Gastrocnemius medialis (tissue), 4 donors: ENCODE measurements at regions of chr17 and their contacts with region 1.

Region 1: DNA sequence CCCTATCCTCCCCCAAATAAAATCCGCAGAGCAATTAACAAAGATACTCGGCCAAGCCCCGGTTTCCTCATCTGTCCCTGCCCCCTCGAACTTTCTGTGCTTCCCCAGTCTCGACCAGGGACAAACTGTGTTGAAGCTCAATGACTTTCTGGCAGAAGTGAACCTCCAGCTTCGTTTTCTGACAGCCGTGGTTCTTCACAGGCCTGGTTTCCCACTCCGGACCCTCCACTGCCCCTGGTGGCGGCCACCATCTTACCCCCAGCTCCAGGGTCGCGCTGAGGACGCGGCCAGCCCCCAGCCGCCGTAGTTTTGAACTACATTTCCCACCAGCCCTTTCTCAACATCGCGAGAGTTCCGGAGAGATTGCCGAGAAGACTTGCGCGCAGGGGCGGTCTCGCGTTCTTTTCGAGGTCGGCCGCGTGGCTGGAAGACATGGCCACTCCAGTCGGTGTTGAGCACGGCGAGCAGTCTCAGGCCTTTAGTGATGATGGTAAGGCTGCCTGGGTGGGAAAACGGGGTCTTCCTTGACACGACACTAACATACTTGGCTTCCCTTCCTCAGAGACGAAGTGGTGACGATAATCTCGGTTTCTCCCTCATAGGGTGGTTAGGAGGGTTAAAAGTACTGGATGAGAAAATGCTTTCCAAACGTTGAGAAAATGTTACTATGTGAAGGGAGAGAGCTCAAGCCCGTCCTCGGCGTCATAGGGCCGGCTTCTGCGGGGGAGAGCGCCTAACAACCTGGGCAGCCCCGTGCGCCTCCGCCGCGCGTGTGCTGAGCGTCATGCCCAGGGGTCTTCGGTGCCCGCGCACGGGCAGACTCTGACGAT is 17.7 kb downstream of the PRCD start:
- DNase-seq: peak; percentile 93 to 94
- ATAC-seq: peak; percentile 86 to 89
- H3K4me3 ChIP-seq: peak overlapping the region; percentile 79 to 100 (median 84)
- H3K27ac ChIP-seq: peak overlapping the region; percentile 89 to 97 (median 94)
- H3K4me1 ChIP-seq: peaks cover 36 to 62% of the 10 kb centered on the region in 2 donors
- H3K27me3 ChIP-seq: no peaks in the 10 kb centered on the region
- CTCF ChIP-seq: peak; percentile 69 to 85 (median 71)
- POLR2A ChIP-seq: peak; percentile 93 to 96

Region 2: GRCh38 chr17:76182016-76182764 is 375.4 kb before region 1 on chr17:
- in situ Hi-C with region 1: no loop called
- intact Hi-C with region 1: loop called (anchors 1 kb)
- DNase-seq: peak; percentile 75 to 89
- ATAC-seq: peak; percentile 85 to 87
- H3K4me3 ChIP-seq: no peak overlapping the region
- H3K27ac ChIP-seq: peak overlapping the region; percentile 8 to 39 (median 26)
- H3K4me1 ChIP-seq: peaks cover 17 to 35% of the 10 kb centered on the region in 2 donors
- H3K27me3 ChIP-seq: no peaks in the 10 kb centered on the region
- CTCF ChIP-seq: peak; percentile 74 to 84 (median 77)
- POLR2A ChIP-seq: no peak

Region 3: GRCh38 chr17:76515274-76515949 is 42.2 kb before region 1 on chr17:
- in situ Hi-C with region 1: no loop called
- intact Hi-C with region 1: loop called (anchors 5 kb)
- DNase-seq: peak; percentile 86 to 91
- ATAC-seq: peak; percentile 97 to 98
- H3K4me3 ChIP-seq: peak overlapping the region; percentile 24 to 54 (median 38)
- H3K27ac ChIP-seq: peak overlapping the region; percentile 73 to 86 (median 82)
- H3K4me1 ChIP-seq: peaks cover 14% of the 10 kb centered on the region in 2 donors
- H3K27me3 ChIP-seq: no peaks in the 10 kb centered on the region
- CTCF ChIP-seq: no peak
- POLR2A ChIP-seq: peak; percentile 21 to 39

Region 4: DNA sequence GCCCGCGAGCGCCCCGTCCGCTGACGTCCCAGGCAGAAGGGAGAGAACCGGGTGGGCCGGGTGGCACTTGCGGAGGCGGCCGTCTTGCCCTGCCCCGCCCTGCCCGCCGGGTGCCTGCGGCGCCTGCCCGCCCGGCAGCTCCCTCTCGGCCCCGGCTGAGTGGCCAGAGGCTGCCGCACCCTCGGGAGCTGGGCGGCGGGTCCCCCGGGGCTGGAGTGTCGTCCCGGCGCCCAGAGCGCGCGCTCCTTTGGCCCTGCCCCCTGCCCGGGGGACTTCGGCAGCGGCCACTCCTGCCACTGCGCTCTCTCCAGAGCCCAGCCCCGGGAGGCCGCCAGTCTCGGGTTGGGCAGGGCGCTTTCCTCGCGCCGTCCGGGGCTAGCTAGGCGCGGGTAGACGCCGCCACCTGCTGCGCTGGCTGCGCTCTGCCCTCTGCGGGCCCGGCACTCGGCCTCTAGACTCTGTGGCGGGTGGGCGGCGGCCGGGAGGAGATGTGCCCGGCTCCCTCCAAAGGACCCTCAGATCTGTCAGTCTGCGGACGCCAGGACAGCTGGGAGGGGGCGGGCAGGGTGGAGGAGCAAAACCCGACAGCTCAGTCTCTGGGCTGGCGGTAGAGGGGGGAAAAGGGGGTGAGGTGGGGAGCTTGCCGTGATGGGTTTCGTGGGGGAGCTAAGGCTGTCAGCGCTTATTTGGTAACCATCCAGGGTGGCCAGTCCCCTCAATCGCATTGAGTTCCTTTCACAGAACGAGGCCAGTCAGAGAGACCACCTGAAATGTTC is 28.4 kb after region 1 on chr17 and contains the start of gene ST6GALNAC2:
- in situ Hi-C with region 1: no loop called
- intact Hi-C with region 1: loop called (anchors 1 kb)
- DNase-seq: peak; percentile 58 to 73
- ATAC-seq: peak; percentile 78 to 84
- H3K4me3 ChIP-seq: peak within 1 kb of the TSS; percentile 64 to 87 (median 78)
- H3K27ac ChIP-seq: peak within 1 kb of the TSS; percentile 61 to 84 (median 72)
- H3K4me1 ChIP-seq: peaks cover 6 to 14% of the 10 kb centered on the region in 2 donors
- H3K27me3 ChIP-seq: peaks cover 0 to 3% (median 0%) of the 10 kb centered on the region in 3 donors
- CTCF ChIP-seq: peak; percentile 67 to 79 (median 75)
- POLR2A ChIP-seq: peak; percentile 58 to 62
- total RNA-seq, gene ST6GALNAC2: 13.6 to 31.1 (median 27.4) TPM

Region 5: GRCh38 chr17:76659928-76660614 is 102.5 kb after region 1 on chr17:
- in situ Hi-C with region 1: no loop called
- intact Hi-C with region 1: no loop called
- DNase-seq: no peak
- ATAC-seq: no peak
- H3K4me3 ChIP-seq: no peak overlapping the region
- H3K27ac ChIP-seq: no peak overlapping the region
- H3K4me1 ChIP-seq: peaks cover 0 to 15% of the 10 kb centered on the region in 2 donors
- H3K27me3 ChIP-seq: no peaks in the 10 kb centered on the region
- CTCF ChIP-seq: no peak
- POLR2A ChIP-seq: no peak

Region 6: DNA sequence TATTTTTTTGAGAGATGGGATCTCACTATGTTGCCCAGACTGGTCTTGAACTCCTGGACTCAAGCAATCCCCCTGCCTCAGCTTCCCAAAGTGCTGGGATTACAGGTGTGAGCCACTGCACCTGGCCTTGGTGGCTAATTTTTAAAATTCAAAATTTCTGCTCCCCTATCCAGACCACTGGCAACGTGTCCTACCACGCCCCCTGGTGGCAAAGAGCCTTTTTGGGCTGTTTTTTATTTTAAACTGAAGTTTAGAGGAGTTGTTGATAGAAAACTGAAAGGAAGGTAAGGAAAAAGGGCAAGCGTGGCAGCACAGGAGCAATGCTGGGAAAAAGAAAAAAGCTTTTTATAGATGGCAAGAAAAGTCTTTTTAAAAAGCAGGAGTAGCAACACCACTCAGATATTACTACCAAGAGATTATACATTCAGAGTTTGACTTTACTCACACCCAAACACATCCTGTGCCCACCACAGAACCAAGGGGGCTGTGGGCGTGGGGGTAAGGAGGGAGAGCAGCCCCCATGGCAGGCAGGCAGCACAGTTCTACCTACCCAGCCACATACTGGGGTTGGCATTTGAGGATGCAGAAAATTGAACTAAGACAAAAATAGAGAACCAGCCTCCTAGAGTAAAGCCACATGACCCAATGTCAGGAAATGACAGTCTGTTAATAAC is 157.4 kb after region 1 on chr17:
- in situ Hi-C with region 1: loop called in 1 of 4 experiments (anchors 25 kb)
- intact Hi-C with region 1: no loop called
- DNase-seq: peak; percentile 19 to 37
- ATAC-seq: no peak
- H3K4me3 ChIP-seq: no peak overlapping the region
- H3K27ac ChIP-seq: peak overlapping the region; percentile 66 to 84 (median 73)
- H3K4me1 ChIP-seq: peaks cover 30 to 33% of the 10 kb centered on the region in 2 donors
- H3K27me3 ChIP-seq: no peaks in the 10 kb centered on the region
- CTCF ChIP-seq: peak; percentile 57 to 84 (median 81)
- POLR2A ChIP-seq: no peak